ENCODE measurements at regions of chr5 and their contacts with region 1.

Region 1: GRCh38 chr5:15794052-15794985 is 294.3 kb downstream of the FBXL7 start:
- ATAC-seq: peak in 4 of 8 experiments; percentile 9 to 29 (median 22)
- H3K4me3 ChIP-seq: no peak overlapping the region
- H3K27ac ChIP-seq: no peak overlapping the region
- H3K4me1 ChIP-seq: peaks cover 0 to 16% of the 10 kb centered on the region in 2 donors

Region 2: GRCh38 chr5:15499528-15500324 is 294.6 kb before region 1 on chr5 and contains the start of gene FBXL7:
- in situ Hi-C with region 1: loop called in 1 of 9 experiments (anchors 25 kb)
- ATAC-seq: peak; percentile 78 to 85 (median 83)
- H3K4me3 ChIP-seq: peak within 1 kb of the TSS; percentile 48 to 83 (median 68)
- H3K27ac ChIP-seq: peak within 1 kb of the TSS in 1 of 2 donors; percentile 14
- H3K4me1 ChIP-seq: peaks cover 13 to 20% of the 10 kb centered on the region in 2 donors
- total RNA-seq, gene FBXL7: 2.9 to 12.8 (median 5.8) TPM

Region 3: DNA sequence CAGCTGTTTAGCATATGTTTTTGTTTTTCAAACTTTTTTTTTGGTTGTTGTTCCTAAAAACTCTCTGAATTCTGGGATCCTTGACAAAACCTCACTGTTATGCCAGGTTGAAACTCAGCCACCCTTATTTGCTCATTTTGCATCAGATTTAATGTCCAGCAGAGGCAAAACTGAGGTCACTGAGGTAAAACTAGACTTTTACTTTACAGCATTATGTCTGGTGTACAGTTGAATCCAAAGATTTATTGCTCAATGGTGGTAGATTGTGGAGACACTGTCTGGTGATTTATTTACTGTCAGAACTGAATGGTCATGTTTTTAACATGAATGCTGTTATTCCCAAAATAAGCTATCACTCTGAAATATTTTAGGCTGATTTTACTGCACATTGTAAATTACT is 206.4 kb before region 1 on chr5:
- in situ Hi-C with region 1: no loop called
- ATAC-seq: peak in 4 of 8 experiments; percentile 35 to 86 (median 47)
- H3K4me3 ChIP-seq: no peak overlapping the region
- H3K27ac ChIP-seq: no peak overlapping the region
- H3K4me1 ChIP-seq: no peaks in the 10 kb centered on the region

Region 4: GRCh38 chr5:15664961-15665360 is 129.4 kb before region 1 on chr5:
- in situ Hi-C with region 1: no loop called
- ATAC-seq: peak in 1 of 8 experiments; percentile 25
- H3K4me3 ChIP-seq: no peak overlapping the region
- H3K27ac ChIP-seq: no peak overlapping the region
- H3K4me1 ChIP-seq: no peaks in the 10 kb centered on the region

Region 5: GRCh38 chr5:16465544-16466466 is 671.5 kb after region 1 on chr5 and contains the start of gene ZNF622:
- in situ Hi-C with region 1: no loop called
- ATAC-seq: peak; percentile 86 to 97 (median 96)
- H3K4me3 ChIP-seq: peak within 1 kb of the TSS; percentile 69 to 75 (median 72)
- H3K27ac ChIP-seq: peak within 1 kb of the TSS; percentile 77 to 86
- H3K4me1 ChIP-seq: peaks cover 16 to 40% of the 10 kb centered on the region in 2 donors
- total RNA-seq, gene ZNF622: 27.6 to 63.3 (median 53.9) TPM